Natural killer cell (primary cell): ENCODE measurements at regions of chrX and their contacts with region 1.

Region 1: GRCh38 chrX:47193475-47194193 is at the start of gene UBA1:
- DNase-seq: peak; percentile 84 to 96
- ATAC-seq: peak; percentile 76 to 90 (median 84)
- H3K4me3 ChIP-seq: peak within 1 kb of the TSS; percentile 98
- H3K4me3 Mint-ChIP-seq: peak within 1 kb of the TSS; percentile 98
- H3K27ac ChIP-seq: peak within 1 kb of the TSS; percentile 93
- H3K27ac Mint-ChIP-seq: peak within 1 kb of the TSS; percentile 93 to 98
- H3K4me1 ChIP-seq: peaks cover 70% of the 10 kb centered on the region
- H3K4me1 Mint-ChIP-seq: peaks cover 51 to 54% of the 10 kb centered on the region in 2 donors
- H3K27me3 ChIP-seq: no peaks in the 10 kb centered on the region
- H3K27me3 Mint-ChIP-seq: no peaks in the 10 kb centered on the region
- CTCF ChIP-seq: peak; percentile 59
- total RNA-seq, gene UBA1: 118 to 168 (median 120) TPM

Region 2: DNA sequence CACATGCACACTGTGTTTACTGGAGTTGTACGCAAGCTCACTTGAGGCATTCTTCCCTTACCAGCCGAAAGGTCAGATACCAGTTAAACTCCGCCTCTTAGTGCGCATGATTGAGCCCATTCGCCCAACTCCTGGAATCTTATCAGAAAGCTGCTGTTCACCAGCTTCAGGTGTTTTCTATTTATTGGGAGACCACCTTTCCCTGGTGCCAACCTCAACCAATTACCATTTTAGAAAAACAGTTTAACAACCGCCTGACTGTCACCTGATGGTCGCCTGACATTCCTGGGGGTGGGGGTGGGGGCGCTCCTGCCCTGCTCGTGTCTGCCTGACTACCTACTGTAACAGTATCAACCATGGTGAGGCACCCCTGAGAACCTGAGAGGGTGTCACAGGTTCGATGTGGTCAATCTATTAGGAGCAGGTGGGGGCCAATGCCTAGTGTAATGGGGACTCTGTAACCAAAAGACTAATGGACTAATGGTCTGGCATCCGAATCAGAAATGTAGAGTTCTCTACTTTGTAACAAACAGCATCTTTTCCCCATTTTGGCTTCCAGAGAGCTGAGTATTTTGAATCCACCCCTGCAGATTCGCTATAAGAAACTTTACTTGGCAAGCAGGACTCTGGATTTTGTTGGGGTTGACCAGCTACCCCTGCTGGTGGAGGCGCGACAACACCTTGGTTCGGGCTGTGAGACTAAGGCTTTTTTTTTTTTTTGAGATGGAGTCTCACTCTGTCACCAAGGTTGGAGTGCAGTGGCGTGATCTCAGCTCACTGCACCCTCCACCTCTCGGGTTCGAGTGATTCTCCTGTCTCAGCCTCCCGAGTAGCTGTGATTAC is 118.5 kb after region 1 on chrX:
- intact Hi-C with region 1: loop called (anchors 1 kb)
- DNase-seq: peak; percentile 16 to 69
- ATAC-seq: peak in 2 of 3 donors; percentile 69 to 70
- H3K4me3 ChIP-seq: no peak overlapping the region
- H3K4me3 Mint-ChIP-seq: no peak overlapping the region
- H3K27ac ChIP-seq: no peak overlapping the region
- H3K27ac Mint-ChIP-seq: no peak overlapping the region
- H3K4me1 ChIP-seq: no peaks in the 10 kb centered on the region
- H3K4me1 Mint-ChIP-seq: no peaks in the 10 kb centered on the region
- H3K27me3 ChIP-seq: no peaks in the 10 kb centered on the region
- H3K27me3 Mint-ChIP-seq: peaks cover 3 to 7% of the 10 kb centered on the region in 2 donors
- CTCF ChIP-seq: no peak

Region 3: GRCh38 chrX:47384502-47384901 is 190.9 kb after region 1 on chrX:
- intact Hi-C with region 1: loop called (anchors 1 kb)
- DNase-seq: peak; percentile 39 to 88
- ATAC-seq: peak; percentile 71 to 82 (median 76)
- H3K4me3 ChIP-seq: no peak overlapping the region
- H3K4me3 Mint-ChIP-seq: no peak overlapping the region
- H3K27ac ChIP-seq: no peak overlapping the region
- H3K27ac Mint-ChIP-seq: no peak overlapping the region
- H3K4me1 ChIP-seq: peaks cover 15% of the 10 kb centered on the region
- H3K4me1 Mint-ChIP-seq: peaks cover 13 to 19% of the 10 kb centered on the region in 2 donors
- H3K27me3 ChIP-seq: no peaks in the 10 kb centered on the region
- H3K27me3 Mint-ChIP-seq: peaks cover 0 to 11% of the 10 kb centered on the region in 2 donors
- CTCF ChIP-seq: peak; percentile 73

Region 4: GRCh38 chrX:47776292-47777006 is 582.8 kb after region 1 on chrX:
- intact Hi-C with region 1: no loop called
- DNase-seq: no peak
- ATAC-seq: no peak
- H3K4me3 ChIP-seq: no peak overlapping the region
- H3K4me3 Mint-ChIP-seq: no peak overlapping the region
- H3K27ac ChIP-seq: no peak overlapping the region
- H3K27ac Mint-ChIP-seq: no peak overlapping the region
- H3K4me1 ChIP-seq: no peaks in the 10 kb centered on the region
- H3K4me1 Mint-ChIP-seq: no peaks in the 10 kb centered on the region
- H3K27me3 ChIP-seq: no peaks in the 10 kb centered on the region
- H3K27me3 Mint-ChIP-seq: peaks cover 14 to 27% of the 10 kb centered on the region in 2 donors
- CTCF ChIP-seq: no peak

Region 5: GRCh38 chrX:47836164-47837072 is 642.8 kb after region 1 on chrX and contains the start of gene ZNF81:
- intact Hi-C with region 1: loop called (anchors 10 kb)
- DNase-seq: peak; percentile 87 to 95
- ATAC-seq: peak; percentile 88 to 94 (median 90)
- H3K4me3 ChIP-seq: peak within 1 kb of the TSS; percentile 74
- H3K4me3 Mint-ChIP-seq: peak within 1 kb of the TSS; percentile 91
- H3K27ac ChIP-seq: peak within 1 kb of the TSS; percentile 79
- H3K27ac Mint-ChIP-seq: peak within 1 kb of the TSS; percentile 93 to 99
- H3K4me1 ChIP-seq: peaks cover 4% of the 10 kb centered on the region
- H3K4me1 Mint-ChIP-seq: peaks cover 20% of the 10 kb centered on the region in 2 donors
- H3K27me3 ChIP-seq: no peaks in the 10 kb centered on the region
- H3K27me3 Mint-ChIP-seq: peaks cover 0 to 7% of the 10 kb centered on the region in 2 donors
- CTCF ChIP-seq: no peak
- total RNA-seq, gene ZNF81: 20.9 to 23.7 (median 21.2) TPM